ENCODE measurements at regions of chr1 and their contacts with region 1.

Region 1: DNA sequence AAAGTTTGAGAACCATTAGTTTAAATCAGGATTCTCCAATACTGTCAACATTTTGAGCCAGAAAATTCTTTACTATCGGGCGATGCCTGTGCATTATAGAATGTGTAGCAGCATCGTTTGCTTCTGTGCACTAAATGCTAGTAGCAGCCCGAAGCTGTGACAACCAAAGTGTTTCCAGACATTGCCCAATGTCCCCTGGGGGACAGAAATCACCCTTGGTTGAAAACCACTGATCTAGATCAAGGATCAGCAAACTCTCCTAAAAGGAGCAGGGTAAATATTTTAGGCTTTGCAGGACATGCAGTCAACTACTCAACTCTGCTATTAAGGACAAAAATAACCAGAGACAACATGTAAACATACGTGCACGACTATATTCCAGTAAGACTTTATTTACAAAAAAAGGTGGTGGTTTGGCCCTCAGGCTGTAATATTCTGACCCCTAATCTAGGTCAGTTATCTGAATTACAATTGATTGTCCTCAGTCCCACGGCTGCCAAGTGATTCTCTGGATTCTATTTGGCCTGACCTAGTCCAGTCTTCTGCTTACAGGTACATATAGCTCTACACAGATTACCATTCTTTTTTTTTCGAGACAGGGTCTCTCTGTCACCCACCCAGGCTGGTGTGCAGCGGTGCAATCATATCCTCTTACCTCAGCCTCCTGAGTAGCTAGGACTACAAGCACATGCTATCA is 10.6 kb downstream of the FAF1 start:
- DNase-seq: no peak
- ATAC-seq: no peak
- H3K4me3 Mint-ChIP-seq: no peak overlapping the region
- H3K27ac Mint-ChIP-seq: peak overlapping the region in 2 of 10 donors; percentile 22 to 51
- H3K4me1 Mint-ChIP-seq: peaks cover 24 to 74% (median 61%) of the 10 kb centered on the region in 4 donors
- H3K27me3 Mint-ChIP-seq: no peaks in the 10 kb centered on the region

Region 2: GRCh38 chr1:50831300-50832061 is 118.0 kb before region 1 on chr1:
- POLR2A ChIA-PET with region 1: interaction called, 10 read pairs
- DNase-seq: no peak
- ATAC-seq: no peak
- H3K4me3 Mint-ChIP-seq: no peak overlapping the region
- H3K27ac Mint-ChIP-seq: no peak overlapping the region
- H3K4me1 Mint-ChIP-seq: peaks cover 4 to 34% (median 17%) of the 10 kb centered on the region in 4 donors
- H3K27me3 Mint-ChIP-seq: no peaks in the 10 kb centered on the region

Measured in naive thymus-derived CD8-positive, alpha-beta T cell (primary cell).